ENCODE measurements at regions of chr13 and their contacts with region 1.

Region 1: GRCh38 chr13:42497798-42498197 is 76.2 kb upstream of the TNFSF11 start:
- DNase-seq: peak; percentile 64
- H3K4me3 Mint-ChIP-seq: no peak overlapping the region
- H3K27ac Mint-ChIP-seq: peak overlapping the region; percentile 69
- H3K4me1 Mint-ChIP-seq: peaks cover 40% of the 10 kb centered on the region
- H3K27me3 Mint-ChIP-seq: no peaks in the 10 kb centered on the region

Region 2: GRCh38 chr13:42333613-42334328 is 164.0 kb before region 1 on chr13:
- CTCF ChIA-PET with region 1: interaction called, 13 read pairs
- intact Hi-C with region 1: loop called (anchors 1 kb)
- DNase-seq: no peak
- H3K4me3 Mint-ChIP-seq: no peak overlapping the region
- H3K27ac Mint-ChIP-seq: no peak overlapping the region
- H3K4me1 Mint-ChIP-seq: peaks cover 27% of the 10 kb centered on the region
- H3K27me3 Mint-ChIP-seq: no peaks in the 10 kb centered on the region

Region 3: DNA sequence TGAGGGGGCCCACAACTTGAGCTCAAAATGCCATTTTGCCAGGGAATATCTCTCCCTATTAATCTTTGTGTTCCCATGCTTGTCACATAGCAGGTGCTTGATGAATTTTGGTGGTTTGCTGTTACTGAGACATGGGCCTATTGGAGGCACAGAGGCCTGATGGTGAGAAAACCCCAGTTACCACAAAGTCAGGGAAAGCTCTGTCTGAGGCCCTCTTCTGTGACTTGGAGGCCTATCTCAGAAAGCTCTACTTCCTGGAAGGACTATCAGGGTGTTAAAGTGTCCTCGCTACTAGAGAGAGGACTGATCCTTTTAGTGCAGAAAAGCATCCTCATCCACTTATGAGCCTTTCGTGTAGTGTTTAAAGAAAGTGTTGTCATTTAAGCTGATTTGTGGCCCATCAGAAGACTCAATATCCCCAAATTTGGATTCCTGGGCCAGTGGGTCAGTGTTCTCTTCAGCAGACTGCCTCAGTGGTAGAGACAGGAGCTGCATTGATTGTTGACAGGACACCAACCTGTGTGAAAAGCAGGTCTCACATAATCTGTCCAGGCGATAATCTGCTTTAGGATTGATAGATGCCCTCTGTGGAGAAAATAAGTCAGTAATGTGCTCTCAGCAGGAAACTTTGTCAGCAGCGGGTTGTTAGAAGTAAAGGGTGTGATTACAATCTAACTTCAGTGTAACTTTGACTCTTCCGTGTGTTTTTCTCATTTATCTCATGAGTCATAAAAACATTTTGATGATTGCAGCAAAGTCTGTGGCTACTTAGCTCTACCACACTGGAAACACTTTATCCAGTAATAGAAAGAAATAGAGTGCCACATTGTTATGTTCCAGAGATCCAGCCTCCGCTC is 104.9 kb before region 1 on chr13:
- CTCF ChIA-PET with region 1: interaction called, 3 read pairs
- intact Hi-C with region 1: loop called (anchors 1 kb)
- DNase-seq: peak; percentile 58
- H3K4me3 Mint-ChIP-seq: peak overlapping the region; percentile 84
- H3K27ac Mint-ChIP-seq: peak overlapping the region; percentile 100
- H3K4me1 Mint-ChIP-seq: peaks cover 74% of the 10 kb centered on the region
- H3K27me3 Mint-ChIP-seq: no peaks in the 10 kb centered on the region

Region 4: GRCh38 chr13:42478531-42479156 is 19.2 kb before region 1 on chr13:
- CTCF ChIA-PET with region 1: no interaction called
- intact Hi-C with region 1: loop called (anchors 1 kb)
- DNase-seq: no peak
- H3K4me3 Mint-ChIP-seq: no peak overlapping the region
- H3K27ac Mint-ChIP-seq: no peak overlapping the region
- H3K4me1 Mint-ChIP-seq: peaks cover 17% of the 10 kb centered on the region
- H3K27me3 Mint-ChIP-seq: no peaks in the 10 kb centered on the region

Region 5: GRCh38 chr13:42574435-42575311 is 76.9 kb after region 1 on chr13:
- CTCF ChIA-PET with region 1: no interaction called
- intact Hi-C with region 1: loop called (anchors 1 kb)
- DNase-seq: peak; percentile 62
- H3K4me3 Mint-ChIP-seq: peak overlapping the region; percentile 76
- H3K27ac Mint-ChIP-seq: peak overlapping the region; percentile 8
- H3K4me1 Mint-ChIP-seq: peaks cover 27% of the 10 kb centered on the region
- H3K27me3 Mint-ChIP-seq: peaks cover 27% of the 10 kb centered on the region

Region 6: DNA sequence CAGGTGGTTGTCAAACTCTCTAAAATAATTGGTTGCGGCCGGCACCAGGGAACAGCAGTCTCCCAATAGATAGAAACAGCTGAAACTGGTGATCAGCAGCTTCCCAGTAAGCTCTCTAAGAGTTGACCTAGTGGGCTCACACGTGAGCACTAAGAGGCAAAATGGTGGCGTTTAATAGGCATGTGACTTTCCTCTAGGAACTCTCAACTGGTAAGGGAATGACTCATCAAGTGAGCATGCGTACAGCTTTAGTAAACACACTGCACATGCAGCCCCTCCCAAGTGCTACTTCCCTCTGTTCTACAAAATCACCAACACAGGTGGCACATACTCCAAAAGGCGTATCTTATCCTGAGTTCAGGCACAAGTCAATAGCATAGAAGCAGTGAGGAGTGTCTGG is 117.9 kb after region 1 on chr13:
- CTCF ChIA-PET with region 1: no interaction called
- intact Hi-C with region 1: no loop called
- DNase-seq: no peak
- H3K4me3 Mint-ChIP-seq: no peak overlapping the region
- H3K27ac Mint-ChIP-seq: no peak overlapping the region
- H3K4me1 Mint-ChIP-seq: no peaks in the 10 kb centered on the region
- H3K27me3 Mint-ChIP-seq: peaks cover 3% of the 10 kb centered on the region

Region 7: DNA sequence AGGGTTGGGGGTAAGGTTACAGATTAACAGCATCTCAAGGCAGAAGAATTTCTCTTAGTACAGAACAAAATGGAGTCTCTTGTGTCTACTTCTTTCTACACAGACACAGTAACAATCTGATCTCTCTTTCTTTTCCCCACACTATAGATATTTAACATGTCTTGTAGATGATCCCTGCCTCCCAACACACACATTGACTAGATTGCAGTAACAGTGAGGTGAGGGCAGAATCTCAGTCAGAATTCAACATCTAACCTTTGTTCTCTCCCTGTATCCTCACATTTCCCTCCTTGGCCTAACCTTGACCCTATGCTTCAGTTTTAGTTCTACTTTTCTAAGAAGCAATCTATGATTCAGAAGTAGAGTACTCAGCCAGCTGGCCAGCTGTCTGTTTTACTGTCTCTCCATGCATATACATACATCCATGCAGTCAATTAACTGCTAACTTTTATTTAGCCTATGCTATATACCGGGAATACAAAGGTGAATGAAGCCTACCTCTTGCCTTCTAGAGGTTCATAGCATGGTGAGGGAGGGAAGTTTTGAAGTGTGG is 543.6 kb after region 1 on chr13:
- CTCF ChIA-PET with region 1: no interaction called
- intact Hi-C with region 1: loop called (anchors 10 kb)
- DNase-seq: no peak
- H3K4me3 Mint-ChIP-seq: no peak overlapping the region
- H3K27ac Mint-ChIP-seq: no peak overlapping the region
- H3K4me1 Mint-ChIP-seq: peaks cover 64% of the 10 kb centered on the region
- H3K27me3 Mint-ChIP-seq: no peaks in the 10 kb centered on the region

Measured in activated naive CD4-positive, alpha-beta T cell treated with anti-CD3 and anti-CD28 coated beads for 36 hours (primary cell).